Activated CD8-positive, alpha-beta memory T cell treated with anti-CD3 and anti-CD28 coated beads, Interleukin-2, amount 10 ng/mL, durations not matched to agents 7 days and 5 days (primary cell): ENCODE measurements at regions of chr19 and their contacts with region 1.

Region 1: DNA sequence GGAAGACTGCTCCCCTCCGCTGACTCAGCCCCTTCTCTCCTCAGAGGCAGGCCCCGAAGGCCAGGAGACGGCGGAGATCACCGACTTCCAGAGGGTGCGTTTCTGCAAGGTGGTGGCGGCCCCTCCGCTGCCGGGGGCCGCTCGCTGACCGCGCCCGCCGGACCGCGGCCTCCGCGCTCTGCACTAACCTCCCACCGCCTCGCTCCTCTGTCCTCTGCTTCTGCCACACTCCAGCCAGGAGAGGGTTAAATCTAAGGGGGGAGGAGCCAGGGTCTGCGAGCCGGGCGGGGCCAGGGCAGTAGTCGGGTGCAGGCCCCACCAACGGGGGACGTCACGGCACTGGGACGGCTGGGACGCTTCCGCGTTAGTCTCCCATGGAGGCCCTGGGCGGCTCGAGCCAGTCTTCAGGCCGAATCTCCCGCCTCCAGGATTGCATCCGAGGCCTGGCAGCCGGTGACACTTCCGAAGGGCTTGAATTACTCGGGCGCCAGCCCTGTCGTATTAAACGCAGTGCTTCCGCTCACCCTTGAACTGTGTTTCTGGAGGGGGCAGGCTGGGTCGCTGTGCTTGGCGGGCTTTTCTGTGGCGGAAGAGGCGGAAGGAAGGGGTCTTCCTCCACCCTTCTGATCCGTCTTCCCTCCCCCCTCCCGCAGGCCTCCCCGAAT is 1.2 kb upstream of the INAFM1 start:
- DNase-seq: peak; percentile 97
- ATAC-seq: peak; percentile 81
- H3K4me3 Mint-ChIP-seq: peak overlapping the region; percentile 94
- H3K27ac Mint-ChIP-seq: peak overlapping the region; percentile 98
- H3K4me1 Mint-ChIP-seq: peaks cover 18% of the 10 kb centered on the region
- H3K27me3 Mint-ChIP-seq: no peaks in the 10 kb centered on the region

Region 2: DNA sequence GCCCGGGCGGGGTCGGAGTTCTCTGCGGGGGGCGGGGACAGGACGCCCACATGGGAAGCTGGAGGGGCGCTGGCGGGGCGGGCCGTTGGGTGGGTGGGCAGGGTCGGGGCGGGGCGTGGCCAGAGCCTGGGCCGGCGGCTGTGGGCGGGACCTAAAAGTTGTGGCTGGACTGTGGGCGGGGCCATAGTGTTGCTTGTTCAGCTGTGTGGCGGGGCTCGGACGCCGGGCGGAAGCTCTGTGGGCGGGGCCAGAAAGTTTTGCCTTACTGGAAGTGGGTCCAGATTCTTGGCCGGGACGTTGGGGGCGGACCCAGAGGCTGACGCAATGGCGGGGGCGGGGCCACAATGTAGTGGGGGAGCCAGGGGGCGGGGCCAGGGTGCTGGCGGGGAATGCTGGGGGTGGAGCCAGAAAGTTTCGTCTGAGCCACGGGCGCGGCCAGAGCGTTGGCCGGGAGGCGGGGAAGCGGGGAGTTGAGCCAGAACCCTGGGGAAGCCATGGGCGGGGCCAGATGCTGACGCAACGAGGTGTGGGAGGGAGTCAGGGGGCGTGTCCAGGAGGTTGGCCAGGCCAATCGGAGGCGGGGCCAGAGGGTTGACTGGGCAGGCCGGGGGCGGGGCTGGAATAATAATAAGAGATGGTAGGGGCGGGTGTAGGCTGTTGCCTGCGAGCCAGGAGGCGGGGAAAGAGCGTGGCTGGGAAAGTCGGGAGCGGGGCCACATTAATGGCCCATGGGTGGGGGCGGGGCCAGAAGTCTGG is 16.6 kb before region 1 on chr19:
- CTCF ChIA-PET with region 1: interaction called, 15 read pairs
- DNase-seq: peak; percentile 100
- ATAC-seq: peak; percentile 89
- H3K4me3 Mint-ChIP-seq: peak overlapping the region; percentile 85
- H3K27ac Mint-ChIP-seq: peak overlapping the region; percentile 92
- H3K4me1 Mint-ChIP-seq: peaks cover 24% of the 10 kb centered on the region
- H3K27me3 Mint-ChIP-seq: no peaks in the 10 kb centered on the region

Region 3: GRCh38 chr19:47284324-47284899 is 11.0 kb after region 1 on chr19:
- CTCF ChIA-PET with region 1: interaction called, 16 read pairs
- DNase-seq: no peak
- ATAC-seq: peak; percentile 27
- H3K4me3 Mint-ChIP-seq: no peak overlapping the region
- H3K27ac Mint-ChIP-seq: no peak overlapping the region
- H3K4me1 Mint-ChIP-seq: peaks cover 2% of the 10 kb centered on the region
- H3K27me3 Mint-ChIP-seq: no peaks in the 10 kb centered on the region

Region 4: DNA sequence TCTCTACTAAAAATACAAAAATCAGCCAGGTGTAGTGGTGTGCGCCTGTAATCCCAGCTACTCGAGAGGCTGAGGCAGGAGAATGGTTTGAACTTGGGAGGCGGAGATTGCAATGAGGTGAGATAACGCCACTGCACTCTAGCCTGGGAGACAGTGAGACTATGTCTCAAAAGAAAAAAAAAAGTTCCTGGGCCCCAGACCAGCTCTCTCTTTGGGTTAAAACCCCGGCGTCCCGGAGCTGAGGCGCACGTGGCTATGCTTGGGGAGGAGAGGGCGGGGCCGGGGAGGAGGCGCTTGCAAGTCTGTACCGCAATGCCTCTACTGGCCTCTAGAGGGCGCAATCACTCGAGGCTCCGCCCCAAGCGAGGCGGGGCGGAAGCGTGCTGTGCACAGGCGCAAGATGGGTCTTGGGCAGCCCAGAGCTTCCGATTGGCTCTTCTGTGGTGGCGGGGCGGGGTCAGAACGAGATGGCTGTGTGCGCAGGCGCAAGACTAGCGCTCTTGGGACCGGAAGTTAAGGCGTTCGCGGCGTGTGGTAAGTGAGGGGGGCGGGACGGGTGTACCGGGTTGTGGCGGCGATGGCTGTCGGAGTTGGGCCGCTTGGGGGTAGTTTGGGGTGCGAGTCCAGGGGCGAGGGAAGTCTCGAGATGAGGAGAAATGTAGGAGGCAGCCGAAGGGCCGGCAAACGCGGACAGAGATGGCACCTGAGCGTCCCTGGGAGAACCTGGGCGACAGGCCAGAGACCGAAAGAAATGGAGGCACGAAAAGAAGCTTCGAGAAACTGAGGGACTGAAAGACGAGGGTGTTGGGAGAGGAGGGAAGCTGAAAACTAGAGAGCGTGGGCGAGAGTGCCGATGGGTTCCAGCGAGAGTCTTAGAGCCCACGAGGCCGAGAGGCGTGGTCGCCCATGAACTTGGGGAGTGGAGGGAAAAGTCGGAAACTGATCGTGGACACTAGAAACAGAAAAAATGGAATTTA is 75.7 kb after region 1 on chr19 and contains the start of gene DHX34:
- CTCF ChIA-PET with region 1: interaction called, 22 read pairs
- DNase-seq: peak; percentile 99
- ATAC-seq: peak; percentile 99
- H3K4me3 Mint-ChIP-seq: peak within 1 kb of the TSS; percentile 94
- H3K27ac Mint-ChIP-seq: peak within 1 kb of the TSS; percentile 90
- H3K4me1 Mint-ChIP-seq: peaks cover 33% of the 10 kb centered on the region
- H3K27me3 Mint-ChIP-seq: no peaks in the 10 kb centered on the region
- total RNA-seq, gene DHX34: 11.7 to 14.3 TPM

Region 5: DNA sequence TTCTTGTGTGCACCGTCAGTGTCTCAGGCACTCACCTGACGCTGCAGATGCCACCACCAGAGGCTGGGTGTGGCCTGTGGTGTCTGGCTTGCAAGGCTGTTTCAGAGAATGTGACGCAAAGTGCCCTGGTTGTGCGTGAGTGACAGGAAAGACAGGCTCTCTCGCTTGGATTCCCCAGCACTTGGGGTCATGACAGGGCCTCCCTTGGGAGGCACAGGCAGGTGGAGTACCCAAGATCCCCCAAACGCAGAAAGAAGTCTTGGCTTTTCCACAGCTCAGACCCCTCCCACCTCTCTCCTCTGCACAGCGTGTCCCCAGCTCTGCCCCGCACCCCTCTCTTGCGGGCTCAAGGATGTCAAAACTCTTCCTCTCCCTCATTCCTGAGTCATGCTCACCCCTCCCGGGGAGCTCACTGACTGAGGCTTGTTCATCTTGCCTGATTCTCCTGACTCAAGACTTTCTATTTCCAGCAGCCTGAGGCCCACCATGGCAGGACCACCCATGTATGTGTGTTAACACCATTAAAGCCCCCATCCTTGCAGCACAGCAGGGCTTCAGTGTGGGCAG is 96.7 kb after region 1 on chr19:
- CTCF ChIA-PET with region 1: no interaction called
- DNase-seq: no peak
- ATAC-seq: no peak
- H3K4me3 Mint-ChIP-seq: no peak overlapping the region
- H3K27ac Mint-ChIP-seq: no peak overlapping the region
- H3K4me1 Mint-ChIP-seq: no peaks in the 10 kb centered on the region
- H3K27me3 Mint-ChIP-seq: no peaks in the 10 kb centered on the region